KBM-7 (cell line): ENCODE measurements at regions of chr12 and their contacts with region 1.

Region 1: DNA sequence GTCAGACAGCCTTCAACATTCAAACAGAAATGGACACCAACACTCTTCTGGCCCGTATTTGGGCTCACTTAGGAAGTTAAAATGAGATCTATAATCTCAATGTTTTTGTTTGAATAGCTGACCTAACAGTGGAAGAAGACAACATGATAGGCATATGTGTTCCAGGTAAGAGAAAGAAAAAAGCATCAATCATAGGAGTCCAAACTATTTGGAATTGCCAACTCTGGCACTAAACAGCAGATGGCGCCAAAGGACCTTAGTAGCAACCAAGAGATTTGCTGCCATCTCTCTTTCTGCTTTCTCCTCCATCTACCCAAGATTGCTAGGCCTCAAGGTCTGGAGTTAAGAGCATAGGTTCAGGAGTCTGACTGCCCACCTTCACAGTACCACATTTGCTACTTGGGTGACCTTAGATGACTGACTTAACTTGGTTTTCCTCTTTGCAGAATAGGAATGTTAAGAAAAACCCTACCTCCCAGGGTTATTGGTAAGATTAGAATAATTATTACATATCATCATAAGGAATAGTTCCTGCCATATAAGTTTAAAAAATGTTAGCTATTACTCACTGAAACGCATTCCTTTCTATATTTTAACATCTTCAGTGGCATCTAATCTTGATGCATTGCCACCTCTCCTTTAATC is 30.2 kb downstream of the PEX5 start:
- DNase-seq: peak; percentile 83

Region 2: GRCh38 chr12:6978609-6979011 is 241.1 kb before region 1 on chr12:
- in situ Hi-C with region 1: no loop called
- DNase-seq: no peak

Region 3: DNA sequence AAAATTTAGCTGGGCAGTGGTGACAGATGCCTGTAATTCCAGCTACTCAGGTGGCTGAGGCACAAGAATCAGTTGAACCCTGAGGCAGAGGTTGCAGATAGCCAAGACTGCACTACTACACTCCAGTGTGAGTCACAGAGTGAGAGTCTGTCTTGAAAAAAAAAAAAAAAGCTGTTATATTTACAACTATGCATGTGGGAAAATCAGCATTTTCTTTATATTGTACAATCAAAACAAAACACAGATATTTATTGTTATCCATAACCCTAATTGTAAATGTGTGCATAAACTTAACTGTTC is 139.9 kb before region 1 on chr12:
- in situ Hi-C with region 1: no loop called
- DNase-seq: no peak

Region 4: DNA sequence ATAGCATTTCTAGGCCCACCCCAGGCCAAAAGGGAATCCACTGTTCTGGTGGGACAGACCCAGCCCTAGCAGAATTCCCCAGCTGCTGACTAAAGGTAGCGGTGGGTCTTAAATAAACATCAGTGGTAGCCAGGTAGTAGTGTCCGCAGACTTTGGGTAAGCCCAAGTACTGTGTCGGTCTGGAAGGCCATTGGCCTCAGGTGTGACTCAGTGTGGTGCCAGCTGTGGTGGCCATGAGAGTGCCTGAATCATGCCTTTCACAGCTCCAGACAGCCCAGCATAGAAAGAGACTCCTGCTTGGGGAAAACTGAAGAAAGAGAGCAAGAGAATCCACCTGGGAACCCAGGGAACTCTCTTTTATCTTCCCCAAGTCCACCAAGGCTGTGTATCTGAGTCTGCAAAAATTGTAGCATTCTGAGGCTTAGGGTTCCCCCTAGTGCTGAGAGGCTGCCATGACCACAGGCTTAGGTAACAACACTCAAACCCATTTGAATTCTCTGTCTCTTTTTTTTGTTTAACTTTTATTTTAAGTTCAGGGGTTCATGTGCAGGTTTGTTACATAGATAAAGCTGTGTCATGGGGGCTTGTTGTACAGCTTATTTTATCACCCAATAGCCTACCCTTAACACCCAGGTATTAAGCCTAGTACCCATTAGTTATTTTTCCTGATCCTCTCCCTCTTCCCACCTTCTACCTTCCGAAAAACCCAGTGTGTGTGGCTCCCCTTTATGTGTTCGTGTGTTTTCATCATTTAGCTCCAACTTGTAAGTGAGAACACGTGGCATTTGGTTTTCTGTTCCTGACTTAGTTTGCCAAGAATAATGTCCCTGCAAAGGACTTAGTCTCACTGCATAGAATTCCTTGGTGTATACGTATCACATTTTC is 240.9 kb after region 1 on chr12:
- in situ Hi-C with region 1: loop called (anchors 25 kb)
- DNase-seq: peak; percentile 69

Region 5: GRCh38 chr12:7638760-7639555 is 419.2 kb after region 1 on chr12:
- in situ Hi-C with region 1: loop called (anchors 25 kb)
- DNase-seq: peak; percentile 95

Region 6: DNA sequence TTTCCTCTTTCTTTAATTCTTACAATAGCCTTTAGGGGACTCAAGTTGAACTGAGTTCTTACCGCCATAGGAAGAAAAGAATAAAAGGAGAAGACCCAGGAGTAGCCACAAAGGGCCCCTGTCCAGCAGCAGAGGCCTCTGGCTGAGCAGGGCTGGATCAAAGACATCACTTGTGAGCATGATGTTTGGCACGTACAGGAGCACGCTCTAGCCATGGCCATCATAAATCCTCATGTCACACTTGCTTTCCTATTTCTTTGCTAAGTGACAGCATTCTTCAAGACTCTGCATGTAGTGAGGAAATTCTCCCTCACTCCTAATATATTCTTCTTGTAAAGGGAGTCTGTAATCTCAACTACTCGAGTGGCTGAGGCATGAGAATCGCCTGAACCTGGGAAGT is 511.8 kb after region 1 on chr12:
- in situ Hi-C with region 1: no loop called
- DNase-seq: no peak